GM12878 (cell line): ENCODE measurements at regions of chr19 and their contacts with region 1.

Region 1: DNA sequence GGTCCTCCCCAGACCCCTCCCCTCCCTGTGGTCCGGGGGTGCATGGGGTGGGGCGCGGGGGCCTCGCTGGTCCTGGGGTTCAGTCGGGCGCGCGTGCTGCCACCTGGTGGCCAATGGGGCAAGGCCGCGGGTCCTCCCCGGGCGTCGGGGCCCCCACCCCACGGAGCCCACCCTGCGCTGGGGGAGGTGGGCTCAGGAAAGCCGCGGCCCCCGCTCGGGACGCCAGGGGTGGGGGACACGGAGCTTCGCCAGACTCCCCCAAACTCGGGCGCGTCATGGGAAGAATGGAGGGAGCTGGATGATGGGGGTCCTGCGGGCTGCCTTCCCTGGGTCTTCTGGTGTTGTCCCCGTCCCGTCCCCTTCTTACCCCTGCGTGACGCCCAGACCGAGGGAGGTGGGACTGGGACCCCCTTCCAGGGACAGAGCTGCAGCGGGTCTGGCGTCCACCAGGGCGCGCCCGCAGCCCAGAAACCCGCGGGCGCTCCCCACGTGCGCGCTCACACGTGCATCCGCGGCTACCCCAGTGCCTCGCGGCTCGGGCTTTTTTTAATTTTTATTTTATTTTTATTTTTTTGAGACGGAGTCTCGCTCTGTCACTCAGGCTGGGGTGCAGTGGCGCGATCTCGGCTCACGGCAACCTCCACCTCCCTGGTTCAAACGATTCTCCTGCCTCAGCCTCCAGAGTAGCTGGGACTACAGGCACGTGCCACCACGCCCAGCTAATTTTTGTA is 19.8 kb upstream of the TCF3 start:
- DNase-seq: no peak
- ATAC-seq: peak; percentile 68
- H3K4me3 ChIP-seq: peak overlapping the region; percentile 55; the same call in 1 of the 2 replicates
- H3K27ac ChIP-seq: no peak overlapping the region
- H3K4me1 ChIP-seq: peaks cover 18% of the 10 kb centered on the region
- H3K27me3 ChIP-seq: no peaks in the 10 kb centered on the region
- CTCF ChIP-seq: peak; percentile 68 to 76 (median 73)
- EP300 ChIP-seq: no peak
- POLR2A ChIP-seq: no peak
- RAD21 ChIP-seq: peak; percentile 80

Region 2: DNA sequence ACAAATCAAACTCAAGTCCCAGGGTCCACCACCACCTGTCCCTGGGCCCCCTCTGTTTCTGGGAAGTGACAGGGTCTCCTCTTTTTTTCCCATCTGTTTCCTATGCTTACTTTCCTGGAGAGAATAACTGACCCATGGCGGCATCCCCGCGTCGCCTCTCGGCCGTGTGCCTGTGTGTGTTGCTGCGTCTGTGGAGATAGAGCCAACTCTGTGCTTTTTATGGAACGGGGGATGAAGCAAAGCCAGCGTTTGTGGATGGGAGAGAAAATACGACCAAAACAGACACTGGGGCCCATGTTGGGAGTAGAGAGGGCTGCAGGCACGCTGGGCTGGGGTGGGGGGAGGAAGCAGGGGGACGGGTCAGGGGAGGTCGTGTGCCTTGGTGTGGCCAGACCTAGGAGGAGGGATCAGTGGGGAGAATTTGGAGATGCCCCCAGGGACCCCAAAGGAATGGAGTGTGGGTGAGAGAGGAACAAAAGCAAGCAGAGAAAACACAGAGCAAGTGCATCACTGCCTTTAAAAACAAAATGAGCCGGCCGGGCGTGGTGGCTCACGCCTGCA is 131.8 kb before region 1 on chr19:
- CTCF ChIA-PET with region 1: interaction called, 3 read pairs
- POLR2A ChIA-PET with region 1: no interaction called
- RAD21 ChIA-PET with region 1: interaction called, 21 read pairs
- SMC1A ChIA-PET with region 1: no interaction called
- in situ Hi-C with region 1: no loop called
- intact Hi-C with region 1: no loop called
- DNase-seq: no peak
- ATAC-seq: no peak
- H3K4me3 ChIP-seq: no peak overlapping the region
- H3K27ac ChIP-seq: no peak overlapping the region
- H3K4me1 ChIP-seq: no peaks in the 10 kb centered on the region
- H3K27me3 ChIP-seq: no peaks in the 10 kb centered on the region
- CTCF ChIP-seq: no peak
- EP300 ChIP-seq: no peak
- POLR2A ChIP-seq: no peak
- RAD21 ChIP-seq: no peak

Region 3: GRCh38 chr19:1592755-1593500 is 79.3 kb before region 1 on chr19 and contains the start of gene MBD3:
- CTCF ChIA-PET with region 1: interaction called, 55 read pairs
- POLR2A ChIA-PET with region 1: no interaction called
- RAD21 ChIA-PET with region 1: interaction called, 16 read pairs
- SMC1A ChIA-PET with region 1: interaction called, 14 read pairs
- in situ Hi-C with region 1: no loop called
- intact Hi-C with region 1: no loop called
- DNase-seq: peak; percentile 44
- ATAC-seq: peak; percentile 81
- H3K4me3 ChIP-seq: peak within 1 kb of the TSS; percentile 98
- H3K27ac ChIP-seq: peak within 1 kb of the TSS; percentile 92
- H3K4me1 ChIP-seq: peaks cover 4% of the 10 kb centered on the region; the same call in 1 of the 2 replicates
- H3K27me3 ChIP-seq: no peaks in the 10 kb centered on the region
- CTCF ChIP-seq: no peak
- EP300 ChIP-seq: no peak
- POLR2A ChIP-seq: peak; percentile 72
- RAD21 ChIP-seq: no peak
- polyA plus RNA-seq, gene MBD3: 0.13 to 1.7 TPM

Region 4: GRCh38 chr19:1652471-1653299 is 19.5 kb before region 1 on chr19 and contains the start of gene TCF3:
- CTCF ChIA-PET with region 1: interaction called, 10 read pairs
- POLR2A ChIA-PET with region 1: interaction called, 6 read pairs
- RAD21 ChIA-PET with region 1: interaction called, 8 read pairs
- SMC1A ChIA-PET with region 1: interaction called, 30 read pairs
- in situ Hi-C with region 1: no loop called
- intact Hi-C with region 1: loop called (anchors 2 kb)
- DNase-seq: peak; percentile 95
- ATAC-seq: peak; percentile 76
- H3K4me3 ChIP-seq: peak within 1 kb of the TSS; percentile 91
- H3K27ac ChIP-seq: peak within 1 kb of the TSS; percentile 100
- H3K4me1 ChIP-seq: peaks cover 23% of the 10 kb centered on the region
- H3K27me3 ChIP-seq: no peaks in the 10 kb centered on the region
- CTCF ChIP-seq: no peak
- EP300 ChIP-seq: peak in 1 of 2 experiments; percentile 54; a peak in 1 of 4 replicates
- POLR2A ChIP-seq: peak; percentile 71
- RAD21 ChIP-seq: no peak
- polyA plus RNA-seq, gene TCF3: 6.7 to 24.0 TPM

Region 5: GRCh38 chr19:1700002-1700732 is 28.0 kb after region 1 on chr19:
- CTCF ChIA-PET with region 1: no interaction called
- POLR2A ChIA-PET with region 1: no interaction called
- RAD21 ChIA-PET with region 1: no interaction called
- SMC1A ChIA-PET with region 1: no interaction called
- in situ Hi-C with region 1: no loop called
- intact Hi-C with region 1: no loop called
- DNase-seq: no peak
- ATAC-seq: no peak
- H3K4me3 ChIP-seq: no peak overlapping the region
- H3K27ac ChIP-seq: no peak overlapping the region
- H3K4me1 ChIP-seq: no peaks in the 10 kb centered on the region
- H3K27me3 ChIP-seq: no peaks in the 10 kb centered on the region; a peak in 2 of 4 replicates
- CTCF ChIP-seq: no peak
- EP300 ChIP-seq: no peak
- POLR2A ChIP-seq: no peak
- RAD21 ChIP-seq: no peak

Region 6: DNA sequence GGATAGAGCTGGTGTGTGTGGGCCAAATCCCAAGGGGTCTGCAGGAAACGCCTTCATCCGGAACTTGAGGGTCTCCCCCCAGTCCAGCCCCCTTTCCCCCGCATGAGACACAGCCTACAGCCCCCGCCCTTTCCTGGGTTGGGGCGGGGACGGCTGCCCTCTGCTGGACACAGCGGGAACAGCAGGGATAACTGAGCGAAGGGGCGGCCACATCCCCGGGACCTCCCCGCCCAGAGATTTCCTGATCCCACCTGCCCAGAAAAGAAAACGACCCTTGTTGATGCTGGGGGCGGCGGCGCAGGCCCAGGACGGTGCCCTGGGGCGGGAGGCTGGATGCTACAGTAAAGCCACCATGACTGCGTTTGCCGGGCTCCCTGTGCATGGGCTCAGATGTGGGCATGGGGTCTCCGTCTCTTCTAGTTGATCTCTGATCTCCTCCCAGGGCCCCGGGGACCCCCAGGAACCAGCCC is 95.3 kb after region 1 on chr19:
- CTCF ChIA-PET with region 1: interaction called, 24 read pairs
- POLR2A ChIA-PET with region 1: no interaction called
- RAD21 ChIA-PET with region 1: interaction called, 3 read pairs
- SMC1A ChIA-PET with region 1: interaction called, 3 read pairs
- in situ Hi-C with region 1: loop called (anchors 5 kb)
- intact Hi-C with region 1: loop called (anchors 2 kb)
- DNase-seq: no peak
- ATAC-seq: peak; percentile 88
- H3K4me3 ChIP-seq: no peak overlapping the region
- H3K27ac ChIP-seq: no peak overlapping the region
- H3K4me1 ChIP-seq: no peaks in the 10 kb centered on the region
- H3K27me3 ChIP-seq: peaks cover 6 to 10% of the 10 kb centered on the region in 2 experiments; a peak in 3 of 4 replicates
- CTCF ChIP-seq: peak; percentile 87 to 98 (median 91)
- EP300 ChIP-seq: no peak
- POLR2A ChIP-seq: no peak
- RAD21 ChIP-seq: peak; percentile 85